PC-9 (cell line): ENCODE measurements at regions of chr2 and their contacts with region 1.

Region 1: GRCh38 chr2:175439416-175439815 is 257.9 kb upstream of the ATP5MC3 start:
- DNase-seq: no peak
- H3K4me3 ChIP-seq: no peak overlapping the region
- H3K27ac ChIP-seq: no peak overlapping the region
- H3K4me1 ChIP-seq: no peaks in the 10 kb centered on the region
- H3K27me3 ChIP-seq: peaks cover 57% of the 10 kb centered on the region
- CTCF ChIP-seq: no peak

Region 2: DNA sequence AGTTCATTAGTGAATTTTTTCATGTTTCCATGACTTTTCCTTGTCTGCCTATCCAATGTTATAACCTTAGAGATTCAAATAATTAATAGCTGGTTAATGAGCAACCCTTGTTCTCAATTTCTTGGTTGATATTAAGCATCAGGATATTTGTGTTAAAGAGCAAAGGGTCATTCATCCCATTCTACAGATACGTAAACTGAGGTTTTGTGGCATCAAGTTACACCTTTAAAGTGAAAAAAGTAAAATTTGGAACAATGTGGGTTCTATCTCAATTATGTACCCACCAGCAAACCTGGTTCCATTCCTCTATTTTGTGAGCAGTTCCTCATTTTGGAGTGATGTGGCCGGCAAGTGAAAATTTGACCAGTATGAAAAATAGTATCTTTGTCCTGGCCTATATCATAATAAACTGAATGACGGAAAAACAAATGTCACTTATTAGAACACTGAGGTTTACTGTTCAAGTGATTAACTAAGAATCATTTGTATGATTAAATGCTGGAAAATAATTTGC is 37.4 kb before region 1 on chr2:
- CTCF ChIA-PET with region 1: no interaction called
- POLR2A ChIA-PET with region 1: interaction called, 11 read pairs
- intact Hi-C with region 1: no loop called
- DNase-seq: no peak
- H3K4me3 ChIP-seq: no peak overlapping the region
- H3K27ac ChIP-seq: no peak overlapping the region
- H3K4me1 ChIP-seq: peaks cover 8% of the 10 kb centered on the region; the same call in 1 of the 2 replicates
- H3K27me3 ChIP-seq: no peaks in the 10 kb centered on the region; the same call in 1 of the 2 replicates
- CTCF ChIP-seq: no peak

Region 3: DNA sequence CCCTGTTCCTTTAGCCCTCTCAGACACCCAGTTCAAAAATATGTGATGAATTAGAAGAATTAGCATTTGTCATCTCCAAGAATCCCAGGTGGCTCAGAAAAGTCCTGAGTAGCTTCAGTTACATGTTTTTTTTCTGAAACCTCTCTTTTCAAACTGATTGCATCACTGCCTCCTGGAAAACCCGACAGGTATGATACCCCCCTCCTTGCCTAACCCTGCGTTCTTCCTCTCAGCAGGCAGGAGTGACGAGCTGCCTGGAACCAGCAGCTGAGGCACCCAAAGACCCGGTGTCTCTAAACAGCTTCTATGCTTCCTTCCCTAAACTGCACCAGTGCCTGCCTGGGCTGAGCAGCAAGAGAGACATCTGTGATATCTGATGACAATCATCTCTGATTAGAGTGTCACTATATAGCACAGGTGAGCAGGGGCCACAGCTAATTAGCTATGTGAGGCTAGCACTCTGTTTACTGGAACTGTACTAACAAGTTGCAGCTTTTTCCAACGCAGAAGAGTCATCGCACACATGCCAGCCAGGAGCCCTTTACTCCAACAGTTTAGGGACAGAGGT is 118.5 kb after region 1 on chr2:
- CTCF ChIA-PET with region 1: no interaction called
- POLR2A ChIA-PET with region 1: no interaction called
- intact Hi-C with region 1: no loop called
- DNase-seq: no peak
- H3K4me3 ChIP-seq: no peak overlapping the region
- H3K27ac ChIP-seq: no peak overlapping the region
- H3K4me1 ChIP-seq: no peaks in the 10 kb centered on the region
- H3K27me3 ChIP-seq: peaks cover 72% of the 10 kb centered on the region
- CTCF ChIP-seq: no peak

Region 4: DNA sequence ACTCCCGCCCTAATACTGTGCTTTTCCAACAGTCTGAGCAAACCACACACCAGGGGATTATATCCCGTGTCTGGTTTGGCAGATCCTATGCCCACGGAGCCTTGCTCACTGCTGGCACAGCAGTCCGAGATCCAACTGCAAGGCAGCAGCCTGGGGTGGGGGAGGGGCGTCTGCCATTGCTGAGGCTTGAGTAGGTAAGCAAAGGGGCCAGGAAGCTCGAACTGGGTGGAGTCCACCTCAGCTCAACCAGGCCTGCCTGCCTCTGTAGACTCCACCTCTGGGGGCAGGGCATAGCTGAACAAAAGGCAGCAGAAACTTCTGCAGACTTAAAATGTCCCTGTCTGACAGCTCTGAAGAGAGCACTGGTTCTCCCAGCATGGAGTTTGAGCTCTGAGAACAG is 518.4 kb after region 1 on chr2:
- CTCF ChIA-PET with region 1: no interaction called
- POLR2A ChIA-PET with region 1: no interaction called
- intact Hi-C with region 1: no loop called
- DNase-seq: no peak
- H3K4me3 ChIP-seq: no peak overlapping the region
- H3K27ac ChIP-seq: no peak overlapping the region
- H3K4me1 ChIP-seq: no peaks in the 10 kb centered on the region
- H3K27me3 ChIP-seq: no peaks in the 10 kb centered on the region
- CTCF ChIP-seq: no peak